Activated CD4-positive, alpha-beta memory T cell treated with anti-CD3 and anti-CD28 coated beads for 36 hours (primary cell): ENCODE measurements at regions of chr6 and their contacts with region 1.

Region 1: DNA sequence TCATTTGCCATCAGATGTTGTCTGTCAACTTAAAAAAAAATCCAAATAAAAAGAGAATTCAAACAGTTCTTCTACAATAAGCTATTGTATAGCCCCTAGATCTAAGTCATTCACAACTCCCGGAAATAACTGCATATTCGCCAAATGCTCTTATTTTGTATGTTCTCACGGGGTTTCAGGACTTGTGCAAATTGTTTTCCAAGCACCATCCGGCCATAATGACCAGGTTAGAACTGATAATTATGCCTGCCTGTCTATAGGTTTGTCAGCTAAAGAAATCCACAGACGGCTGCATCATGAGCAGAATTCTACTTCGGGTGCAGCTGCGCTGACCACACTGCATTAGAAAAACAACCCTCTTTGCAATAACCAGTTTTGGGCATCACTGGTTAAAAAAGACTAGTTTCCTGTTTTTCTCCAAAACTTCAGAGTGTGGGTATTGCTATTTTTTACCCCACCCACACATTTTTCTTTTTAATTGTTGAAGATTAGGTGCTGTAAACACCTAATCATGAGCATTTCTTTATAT is 87.7 kb downstream of the HIVEP2 start:
- DNase-seq: no peak
- H3K4me3 Mint-ChIP-seq: peak overlapping the region; percentile 66
- H3K27ac Mint-ChIP-seq: peak overlapping the region; percentile 92
- H3K4me1 Mint-ChIP-seq: peaks cover 92% of the 10 kb centered on the region
- H3K27me3 Mint-ChIP-seq: no peaks in the 10 kb centered on the region

Region 2: GRCh38 chr6:142763205-142763604 is 94.1 kb before region 1 on chr6:
- CTCF ChIA-PET with region 1: no interaction called
- POLR2A ChIA-PET with region 1: no interaction called
- intact Hi-C with region 1: no loop called
- DNase-seq: no peak
- H3K4me3 Mint-ChIP-seq: no peak overlapping the region
- H3K27ac Mint-ChIP-seq: peak overlapping the region; percentile 11
- H3K4me1 Mint-ChIP-seq: peaks cover 38% of the 10 kb centered on the region
- H3K27me3 Mint-ChIP-seq: no peaks in the 10 kb centered on the region

Region 3: GRCh38 chr6:142773859-142774648 is 83.2 kb before region 1 on chr6:
- CTCF ChIA-PET with region 1: no interaction called
- POLR2A ChIA-PET with region 1: no interaction called
- intact Hi-C with region 1: loop called (anchors 1 kb)
- DNase-seq: peak; percentile 56
- H3K4me3 Mint-ChIP-seq: peak overlapping the region; percentile 62
- H3K27ac Mint-ChIP-seq: peak overlapping the region; percentile 93
- H3K4me1 Mint-ChIP-seq: peaks cover 62% of the 10 kb centered on the region
- H3K27me3 Mint-ChIP-seq: no peaks in the 10 kb centered on the region

Region 4: GRCh38 chr6:142871910-142872331 is 14.6 kb after region 1 on chr6:
- CTCF ChIA-PET with region 1: interaction called, 4 read pairs
- POLR2A ChIA-PET with region 1: interaction called, 8 read pairs
- intact Hi-C with region 1: loop called (anchors 1 kb)
- DNase-seq: peak; percentile 80
- H3K4me3 Mint-ChIP-seq: peak overlapping the region; percentile 38
- H3K27ac Mint-ChIP-seq: peak overlapping the region; percentile 82
- H3K4me1 Mint-ChIP-seq: peaks cover 85% of the 10 kb centered on the region
- H3K27me3 Mint-ChIP-seq: no peaks in the 10 kb centered on the region

Region 5: DNA sequence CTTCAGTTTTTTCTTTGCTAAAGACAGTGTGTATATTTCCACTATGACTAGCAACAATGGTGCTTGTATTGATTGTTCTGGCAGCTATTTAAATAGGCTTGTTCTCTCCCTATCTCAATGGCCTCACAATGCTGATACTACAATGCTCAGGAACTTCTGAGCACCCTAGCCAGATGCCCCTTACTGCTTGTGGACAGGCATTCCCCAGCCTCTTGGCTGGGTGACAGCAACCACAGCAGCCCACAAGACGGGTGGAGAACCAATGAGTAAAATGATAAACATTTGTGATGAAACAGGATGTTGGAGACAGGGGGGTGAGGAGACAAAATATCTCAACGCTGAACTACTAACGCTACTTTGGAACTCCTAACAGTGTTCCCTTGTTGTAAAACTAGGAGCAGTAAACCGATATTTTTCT is 45.3 kb after region 1 on chr6:
- CTCF ChIA-PET with region 1: interaction called, 7 read pairs
- POLR2A ChIA-PET with region 1: interaction called, 4 read pairs
- intact Hi-C with region 1: loop called (anchors 1 kb)
- DNase-seq: peak; percentile 87
- H3K4me3 Mint-ChIP-seq: peak overlapping the region; percentile 56
- H3K27ac Mint-ChIP-seq: peak overlapping the region; percentile 87
- H3K4me1 Mint-ChIP-seq: peaks cover 59% of the 10 kb centered on the region
- H3K27me3 Mint-ChIP-seq: no peaks in the 10 kb centered on the region